ENCODE measurements at regions of chr11 and their contacts with region 1.

Region 1: GRCh38 chr11:27740362-27741024 is 40.2 kb upstream of the BDNF start:
- DNase-seq: no peak
- H3K4me3 ChIP-seq: no peak overlapping the region
- H3K27ac ChIP-seq: no peak overlapping the region
- H3K4me1 ChIP-seq: no peaks in the 10 kb centered on the region
- H3K27me3 ChIP-seq: peaks cover 0 to 4% of the 10 kb centered on the region in 2 donors
- CTCF ChIP-seq: no peak

Region 2: GRCh38 chr11:27783701-27784355 is 43.3 kb after region 1 on chr11:
- intact Hi-C with region 1: no loop called
- DNase-seq: no peak
- H3K4me3 ChIP-seq: no peak overlapping the region
- H3K27ac ChIP-seq: no peak overlapping the region
- H3K4me1 ChIP-seq: no peaks in the 10 kb centered on the region
- H3K27me3 ChIP-seq: no peaks in the 10 kb centered on the region
- CTCF ChIP-seq: no peak

Region 3: GRCh38 chr11:27874998-27875830 is 134.7 kb after region 1 on chr11:
- intact Hi-C with region 1: loop called (anchors 10 kb)
- DNase-seq: no peak
- H3K4me3 ChIP-seq: no peak overlapping the region
- H3K27ac ChIP-seq: no peak overlapping the region
- H3K4me1 ChIP-seq: no peaks in the 10 kb centered on the region
- H3K27me3 ChIP-seq: peaks cover 0 to 4% of the 10 kb centered on the region in 2 donors
- CTCF ChIP-seq: no peak

Measured in tibial artery (tissue), 4 donors.